Ascending aorta (tissue), 2 donors: ENCODE measurements at regions of chr20 and their contacts with region 1.

Region 1: DNA sequence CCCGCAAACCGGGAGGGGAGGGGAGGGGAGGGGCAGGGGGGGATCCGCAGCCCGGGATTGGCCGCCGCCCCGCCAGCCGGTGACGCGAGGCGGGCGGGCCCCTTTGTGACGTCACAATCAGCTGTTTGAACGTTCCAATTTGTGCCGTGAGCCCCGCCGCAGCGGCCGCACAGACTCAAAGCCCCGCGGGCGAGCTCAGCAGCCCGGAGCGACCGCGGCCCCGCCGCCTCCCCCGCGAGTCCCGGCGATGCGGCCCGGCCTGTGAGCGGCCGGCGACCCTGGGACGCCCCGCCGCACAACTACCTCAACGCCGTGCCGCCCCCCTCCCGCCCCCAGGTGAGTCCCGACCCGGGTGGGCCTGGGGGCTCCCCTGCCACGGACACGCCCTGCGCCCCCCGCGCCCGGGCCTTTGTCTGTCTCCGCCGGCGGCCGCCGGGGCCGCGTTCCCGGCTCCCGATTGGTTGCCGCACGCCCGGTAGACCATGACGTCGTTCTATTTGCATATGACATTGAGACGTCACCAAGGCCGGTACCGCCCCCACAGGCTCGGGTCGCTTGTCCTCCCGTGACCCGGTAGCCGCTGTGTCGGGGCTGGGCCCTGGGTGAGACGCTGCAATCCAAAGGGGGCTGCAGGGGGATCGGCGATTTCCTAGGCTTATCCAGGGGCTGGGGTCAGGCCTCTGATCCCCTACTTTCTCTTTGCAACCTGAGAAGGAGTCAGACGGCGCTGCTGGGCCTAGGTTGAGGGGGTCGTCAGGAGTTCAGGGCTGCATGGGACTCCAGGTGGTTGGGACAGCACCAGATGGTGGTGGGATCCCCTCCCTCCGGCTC is at the start of gene TP53INP2:
- DNase-seq: peak; percentile 82 to 97
- H3K4me3 ChIP-seq: peak within 1 kb of the TSS; percentile 76 to 85
- H3K27ac ChIP-seq: peak within 1 kb of the TSS; percentile 98 to 99
- H3K4me1 ChIP-seq: peaks cover 5 to 12% of the 10 kb centered on the region in 2 donors
- H3K27me3 ChIP-seq: no peaks in the 10 kb centered on the region
- CTCF ChIP-seq: no peak
- total RNA-seq, gene TP53INP2: 6.2 TPM

Region 2: DNA sequence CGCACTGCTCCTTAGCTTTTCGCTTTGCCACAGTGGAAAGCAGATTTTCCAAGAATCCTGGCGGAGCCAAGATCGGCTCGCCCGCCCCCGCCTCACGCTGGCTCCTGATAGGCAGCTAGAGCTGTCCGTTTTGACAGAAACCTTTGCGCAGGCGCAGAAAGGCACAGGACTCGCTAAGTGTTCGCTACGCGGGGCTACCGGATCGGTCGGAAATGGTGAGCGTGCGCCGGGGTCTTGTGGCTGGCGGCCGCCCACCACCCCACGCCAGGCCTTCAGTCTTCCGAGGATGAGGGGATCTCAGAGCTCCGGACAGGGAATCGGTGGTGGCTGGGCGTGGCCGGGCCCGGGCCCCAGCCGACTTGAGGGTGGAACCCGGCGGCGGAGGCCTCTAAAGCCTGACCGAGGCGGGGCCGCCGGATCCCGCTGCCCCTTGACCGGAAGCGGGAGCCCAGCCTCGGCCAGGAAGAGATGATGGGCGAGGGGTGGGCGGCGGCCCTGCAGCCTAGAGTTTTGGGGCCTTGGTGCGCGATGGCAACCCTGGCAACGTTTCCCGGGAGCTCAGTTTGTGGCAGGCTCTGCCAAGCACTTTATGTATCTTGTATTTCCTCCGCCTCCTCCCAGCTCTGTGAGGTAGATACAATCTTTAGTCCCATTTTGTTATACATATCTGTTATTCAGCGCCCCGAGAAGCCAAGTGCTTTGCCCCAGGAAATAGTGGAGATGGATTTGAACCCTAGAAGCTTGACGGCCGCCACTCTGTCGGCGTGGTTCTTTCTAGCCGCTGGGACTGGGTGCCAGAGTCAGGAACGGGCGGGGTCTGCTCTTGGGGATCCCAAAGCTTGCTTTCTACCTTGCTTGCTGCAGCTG is 187.9 kb before region 1 on chr20 and contains the start of gene DYNLRB1:
- intact Hi-C with region 1: loop called (anchors 5 kb)
- DNase-seq: peak; percentile 82 to 98
- H3K4me3 ChIP-seq: peak within 1 kb of the TSS; percentile 78 to 80
- H3K27ac ChIP-seq: peak within 1 kb of the TSS; percentile 89 to 97
- H3K4me1 ChIP-seq: peaks cover 0 to 27% of the 10 kb centered on the region in 2 donors
- H3K27me3 ChIP-seq: no peaks in the 10 kb centered on the region
- CTCF ChIP-seq: no peak
- total RNA-seq, gene DYNLRB1: 148 TPM

Region 3: DNA sequence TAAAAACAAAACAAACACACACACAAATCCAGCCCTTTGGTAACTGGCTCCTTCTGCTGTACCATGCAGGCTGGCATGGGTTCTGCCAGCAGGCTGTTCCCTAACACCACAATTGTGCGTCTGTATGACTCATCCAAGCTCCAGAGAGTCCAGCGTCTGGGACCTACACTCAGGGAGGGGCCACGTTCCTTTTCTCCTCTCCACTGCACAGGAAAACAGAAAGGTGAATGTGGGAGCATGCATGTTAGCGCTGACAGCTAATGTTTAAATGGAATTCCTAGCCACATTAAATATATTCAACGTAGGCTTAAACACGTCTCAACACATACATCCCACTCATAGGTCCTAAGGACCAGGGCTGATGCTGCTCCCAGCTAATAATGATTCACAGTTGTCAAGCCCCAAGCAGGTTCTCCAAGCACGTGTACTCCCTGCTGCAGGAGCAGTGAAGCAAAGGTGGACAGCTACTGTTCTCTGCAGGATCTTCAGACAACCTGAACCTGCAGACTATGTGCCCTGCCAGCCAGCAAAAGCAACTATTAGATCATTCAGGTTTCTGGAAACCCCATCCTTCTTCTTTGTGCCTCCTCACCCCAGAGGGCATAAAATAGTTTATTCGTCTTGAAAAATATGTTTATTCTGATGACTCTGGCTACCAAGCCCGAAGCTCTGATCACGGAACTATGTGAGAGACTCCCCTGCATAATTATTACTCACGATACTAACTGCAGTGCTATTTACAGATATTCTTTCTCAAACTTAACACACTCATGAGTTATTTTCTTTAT is 125.0 kb before region 1 on chr20:
- intact Hi-C with region 1: loop called (anchors 2 kb)
- DNase-seq: peak in 1 of 2 donors; percentile 80
- H3K4me3 ChIP-seq: no peak overlapping the region
- H3K27ac ChIP-seq: no peak overlapping the region
- H3K4me1 ChIP-seq: peaks cover 0 to 22% of the 10 kb centered on the region in 2 donors
- H3K27me3 ChIP-seq: no peaks in the 10 kb centered on the region
- CTCF ChIP-seq: peak; percentile 56 to 79 (median 78)

Region 4: GRCh38 chr20:34876162-34877001 is 172.0 kb after region 1 on chr20 and contains the start of gene ACSS2:
- intact Hi-C with region 1: loop called (anchors 5 kb)
- DNase-seq: peak; percentile 98 to 100
- H3K4me3 ChIP-seq: peak within 1 kb of the TSS; percentile 97 to 99
- H3K27ac ChIP-seq: peak within 1 kb of the TSS; percentile 91 to 97
- H3K4me1 ChIP-seq: peaks cover 0 to 22% of the 10 kb centered on the region in 2 donors
- H3K27me3 ChIP-seq: no peaks in the 10 kb centered on the region
- CTCF ChIP-seq: no peak
- total RNA-seq, gene ACSS2: 156 TPM